ENCODE measurements at regions of chr14 and their contacts with region 1.

Region 1: DNA sequence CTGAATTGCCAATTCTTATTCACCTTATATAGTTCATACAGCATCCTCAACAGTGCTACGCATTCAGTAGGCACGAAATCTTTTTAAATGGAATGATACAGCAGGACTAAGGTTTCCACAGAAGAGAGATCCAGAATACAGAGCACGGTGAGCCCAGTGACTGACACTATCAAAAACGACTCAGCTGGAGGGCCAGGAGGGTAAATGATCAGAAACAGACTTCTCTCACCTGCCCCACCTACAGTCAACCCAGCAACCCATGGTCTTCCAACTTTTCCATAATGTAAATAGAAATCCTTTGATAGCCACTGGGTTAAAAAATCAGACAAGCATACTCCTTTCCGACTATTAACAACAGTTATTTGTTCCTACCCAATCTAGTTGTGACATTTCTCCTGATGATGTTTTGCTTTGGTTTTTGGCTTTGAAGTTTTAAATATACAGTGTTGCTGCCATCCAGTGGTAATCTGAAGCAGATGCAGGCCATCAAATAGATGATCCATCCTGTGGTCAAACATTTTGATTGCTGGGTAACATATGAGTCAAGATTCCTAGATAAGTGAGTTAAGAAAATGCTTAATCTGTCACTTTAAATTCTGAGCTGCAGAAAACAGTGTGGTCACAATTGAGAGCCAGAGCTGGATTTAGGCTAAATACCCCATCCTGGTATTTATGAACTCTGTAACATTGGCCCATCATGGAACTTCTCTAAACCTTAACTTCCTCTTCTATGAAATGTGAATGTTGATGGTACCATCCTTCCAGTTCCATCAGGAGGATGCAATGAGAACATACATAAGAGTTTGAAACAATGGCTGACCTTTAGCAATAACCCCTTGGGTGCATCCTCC is 42.0 kb downstream of the GPHB5 start:
- DNase-seq: peak; percentile 48
- H3K4me3 ChIP-seq: no peak overlapping the region
- H3K27ac ChIP-seq: no peak overlapping the region
- H3K4me1 ChIP-seq: no peaks in the 10 kb centered on the region
- CTCF ChIP-seq: peak; percentile 96

Region 2: DNA sequence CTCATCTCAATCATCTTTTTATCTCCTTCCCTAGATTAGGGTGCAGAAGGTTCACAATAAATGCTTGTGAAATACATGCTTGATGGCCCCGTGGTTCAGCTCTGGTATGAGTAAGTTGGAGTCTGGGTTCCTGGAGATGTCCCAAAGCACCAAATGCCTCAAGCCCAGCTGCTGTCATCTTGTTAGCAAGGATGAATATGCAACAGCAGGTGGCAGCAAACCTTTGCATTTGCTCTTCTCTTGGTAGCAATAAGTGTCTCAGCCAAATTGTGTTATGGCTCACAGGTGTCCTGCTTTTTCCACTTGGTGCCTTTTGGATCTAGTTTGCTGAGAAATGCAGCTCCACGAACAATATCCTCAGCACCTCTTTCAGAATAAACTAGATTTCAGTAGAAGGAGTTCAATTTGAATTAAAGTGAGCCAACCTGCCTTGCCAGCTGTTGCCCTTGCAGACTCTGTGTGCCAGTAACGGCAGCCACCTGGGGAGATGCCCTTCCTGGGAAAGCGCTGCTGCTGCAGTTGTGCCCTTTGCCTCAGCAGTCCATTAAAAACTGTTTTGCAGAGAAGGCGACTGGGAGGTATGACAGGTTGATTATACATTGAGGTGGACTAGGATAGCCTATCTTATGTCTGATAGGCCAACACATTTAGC is 1097.2 kb before region 1 on chr14:
- CTCF ChIA-PET with region 1: no interaction called
- POLR2A ChIA-PET with region 1: no interaction called
- intact Hi-C with region 1: loop called (anchors 5 kb)
- DNase-seq: peak; percentile 49
- H3K4me3 ChIP-seq: no peak overlapping the region
- H3K27ac ChIP-seq: no peak overlapping the region
- H3K4me1 ChIP-seq: no peaks in the 10 kb centered on the region
- CTCF ChIP-seq: peak; percentile 75

Region 3: DNA sequence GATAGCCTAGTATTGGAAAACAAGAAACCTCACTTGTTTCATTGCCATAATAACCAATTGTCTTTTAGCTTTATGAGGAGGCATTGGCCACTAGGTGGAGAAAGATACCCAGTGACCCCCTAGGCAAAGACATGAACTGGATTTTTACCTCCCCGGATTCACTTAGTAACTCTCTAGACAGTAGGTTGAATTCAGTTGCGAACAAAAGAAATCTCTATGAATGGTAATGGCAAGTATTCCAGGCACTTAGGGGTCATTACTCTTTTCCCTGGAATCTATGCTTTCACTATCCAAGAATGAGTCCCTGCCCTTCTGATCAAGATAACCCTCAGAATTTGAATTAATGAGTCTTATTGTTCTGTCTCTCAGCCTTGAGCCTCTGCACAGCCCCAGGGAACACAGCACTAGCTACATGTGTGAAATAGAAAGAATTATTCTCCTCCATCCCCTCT is 101.9 kb before region 1 on chr14:
- CTCF ChIA-PET with region 1: no interaction called
- POLR2A ChIA-PET with region 1: no interaction called
- intact Hi-C with region 1: loop called (anchors 5 kb)
- DNase-seq: peak; percentile 32
- H3K4me3 ChIP-seq: no peak overlapping the region
- H3K27ac ChIP-seq: no peak overlapping the region
- H3K4me1 ChIP-seq: no peaks in the 10 kb centered on the region
- CTCF ChIP-seq: peak; percentile 74

Region 4: DNA sequence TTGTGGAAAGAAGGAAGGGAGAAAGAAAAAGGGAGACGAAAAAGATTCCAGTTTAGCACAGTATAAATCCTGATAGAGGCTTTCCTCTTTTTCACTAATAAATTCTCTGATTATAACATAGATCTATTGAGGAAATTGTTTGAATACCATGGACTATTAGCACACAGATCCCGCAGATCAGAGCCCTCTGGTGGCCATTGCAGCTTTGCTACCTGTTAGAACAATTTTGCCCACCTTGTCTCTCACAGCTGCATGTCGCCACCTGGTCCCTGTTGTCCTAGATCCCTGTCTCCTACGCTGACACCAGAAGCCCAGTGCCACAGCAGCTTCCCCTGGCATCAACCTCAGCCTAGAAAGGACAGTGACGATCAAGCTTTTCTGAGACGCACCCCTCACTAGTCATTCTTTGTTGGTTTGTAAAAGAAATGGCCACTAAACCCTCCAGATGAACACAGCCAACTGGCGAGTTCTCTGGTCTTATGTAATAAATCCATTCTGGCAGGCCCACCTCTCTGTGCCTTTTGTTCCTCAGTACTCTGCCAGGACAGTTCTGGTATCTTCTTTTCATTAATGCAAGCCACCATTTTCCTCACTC is 32.1 kb after region 1 on chr14:
- CTCF ChIA-PET with region 1: no interaction called
- POLR2A ChIA-PET with region 1: no interaction called
- intact Hi-C with region 1: no loop called
- DNase-seq: peak; percentile 46
- H3K4me3 ChIP-seq: no peak overlapping the region
- H3K27ac ChIP-seq: no peak overlapping the region
- H3K4me1 ChIP-seq: no peaks in the 10 kb centered on the region
- CTCF ChIP-seq: peak; percentile 83

Region 5: DNA sequence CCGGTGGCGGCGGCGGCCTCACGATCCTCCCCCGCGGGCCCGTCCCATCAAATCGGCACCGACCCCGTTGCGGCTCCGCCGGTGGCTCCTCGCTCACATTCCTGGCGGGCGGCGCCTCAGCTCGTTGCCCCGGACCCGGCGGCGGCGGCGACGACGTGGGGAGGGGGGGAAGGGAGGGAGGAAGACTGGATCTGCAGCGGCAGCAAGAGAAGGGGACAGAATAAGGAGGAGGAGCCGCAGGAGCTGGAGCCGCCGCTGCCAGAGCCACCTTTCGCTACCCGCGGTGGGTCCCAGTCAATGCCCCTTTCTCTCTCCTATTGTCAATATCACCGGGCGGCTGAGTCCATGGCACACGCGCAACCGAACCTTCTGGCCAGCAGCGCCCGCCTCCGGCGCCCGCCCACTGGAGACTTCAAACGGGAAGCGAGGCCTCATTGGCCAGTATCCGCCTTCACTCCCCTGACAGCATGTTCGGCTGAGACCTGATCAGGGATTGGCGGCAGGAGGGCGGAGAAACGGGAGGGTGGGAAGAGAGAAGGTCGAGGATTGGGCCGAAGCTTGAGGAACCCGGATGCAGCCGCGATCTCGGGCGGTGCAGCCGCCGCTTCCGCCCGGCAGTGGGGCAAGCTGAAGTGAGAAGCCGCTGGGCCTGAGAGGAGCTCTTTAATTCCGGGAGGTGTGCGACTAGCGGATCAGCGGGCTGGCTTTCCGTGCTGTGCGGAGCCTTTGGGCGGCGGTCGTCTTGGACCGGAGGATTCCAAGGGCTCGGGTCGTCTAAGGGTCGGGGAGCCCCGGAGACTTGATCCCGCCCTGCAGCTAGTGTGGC is 266.5 kb after region 1 on chr14 and contains the start of gene PPP2R5E:
- CTCF ChIA-PET with region 1: no interaction called
- POLR2A ChIA-PET with region 1: no interaction called
- intact Hi-C with region 1: no loop called
- DNase-seq: peak; percentile 98
- H3K4me3 ChIP-seq: peak within 1 kb of the TSS; percentile 92
- H3K27ac ChIP-seq: peak within 1 kb of the TSS; percentile 70
- H3K4me1 ChIP-seq: peaks cover 25% of the 10 kb centered on the region
- CTCF ChIP-seq: no peak
- total RNA-seq, gene PPP2R5E: 10.1 and 12.5 TPM in 2 replicates